CD4-positive, alpha-beta T cell (primary cell): ENCODE measurements at regions of chr10 and their contacts with region 1.

Region 1: GRCh38 chr10:124418726-124419501 is at the start of gene OAT:
- DNase-seq: peak; percentile 91 to 98 (median 96)
- ATAC-seq: peak; percentile 97
- H3K4me3 ChIP-seq: peak within 1 kb of the TSS; percentile 75
- H3K4me3 Mint-ChIP-seq: peak within 1 kb of the TSS; percentile 92
- H3K27ac ChIP-seq: peak within 1 kb of the TSS; percentile 23 to 44
- H3K27ac Mint-ChIP-seq: peak within 1 kb of the TSS; percentile 82
- H3K4me1 ChIP-seq: peaks cover 14% of the 10 kb centered on the region
- H3K4me1 Mint-ChIP-seq: peaks cover 41% of the 10 kb centered on the region
- H3K27me3 ChIP-seq: peaks cover 0 to 3% of the 10 kb centered on the region in 2 experiments
- H3K27me3 Mint-ChIP-seq: peaks cover 9% of the 10 kb centered on the region
- CTCF ChIP-seq: no peak
- total RNA-seq, gene OAT: 48.5 to 54.9 TPM

Region 2: GRCh38 chr10:123019941-123020703 is 1398.8 kb before region 1 on chr10:
- CTCF ChIA-PET with region 1: no interaction called
- POLR2A ChIA-PET with region 1: no interaction called
- intact Hi-C with region 1: loop called in 1 of 2 experiments (anchors 10 kb)
- DNase-seq: no peak
- ATAC-seq: no peak
- H3K4me3 ChIP-seq: no peak overlapping the region
- H3K4me3 Mint-ChIP-seq: no peak overlapping the region
- H3K27ac ChIP-seq: no peak overlapping the region
- H3K27ac Mint-ChIP-seq: no peak overlapping the region
- H3K4me1 ChIP-seq: no peaks in the 10 kb centered on the region
- H3K4me1 Mint-ChIP-seq: peaks cover 9% of the 10 kb centered on the region
- H3K27me3 ChIP-seq: no peaks in the 10 kb centered on the region
- H3K27me3 Mint-ChIP-seq: no peaks in the 10 kb centered on the region
- CTCF ChIP-seq: no peak

Region 3: DNA sequence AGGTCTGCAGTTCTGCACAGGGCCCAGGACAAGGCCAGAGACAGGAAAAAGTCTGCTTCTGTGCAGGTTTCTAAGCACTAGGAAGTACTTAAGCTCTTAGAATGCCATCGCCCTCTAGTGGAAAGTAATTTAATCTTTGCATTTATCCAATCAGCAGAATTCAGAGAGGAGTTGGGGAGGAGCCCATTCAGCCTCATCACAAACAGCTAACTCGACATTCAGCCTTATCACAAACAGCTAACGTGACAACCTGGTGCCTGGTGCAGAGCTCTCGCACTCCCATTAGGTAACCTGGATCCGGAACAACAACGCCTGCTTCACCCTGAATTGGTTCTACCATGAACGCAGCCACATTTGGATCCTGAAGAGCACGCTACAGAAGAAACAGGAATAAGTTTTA is 15.4 kb before region 1 on chr10:
- CTCF ChIA-PET with region 1: interaction called, 15 read pairs
- POLR2A ChIA-PET with region 1: interaction called, 7 read pairs
- intact Hi-C with region 1: no loop called
- DNase-seq: peak in 6 of 14 experiments; percentile 6 to 85 (median 54)
- ATAC-seq: peak; percentile 100
- H3K4me3 ChIP-seq: no peak overlapping the region
- H3K4me3 Mint-ChIP-seq: no peak overlapping the region
- H3K27ac ChIP-seq: peak overlapping the region in 1 of 2 donors; percentile 25
- H3K27ac Mint-ChIP-seq: peak overlapping the region; percentile 6
- H3K4me1 ChIP-seq: peaks cover 11% of the 10 kb centered on the region
- H3K4me1 Mint-ChIP-seq: peaks cover 9% of the 10 kb centered on the region
- H3K27me3 ChIP-seq: no peaks in the 10 kb centered on the region
- H3K27me3 Mint-ChIP-seq: no peaks in the 10 kb centered on the region
- CTCF ChIP-seq: peak; percentile 57

Region 4: DNA sequence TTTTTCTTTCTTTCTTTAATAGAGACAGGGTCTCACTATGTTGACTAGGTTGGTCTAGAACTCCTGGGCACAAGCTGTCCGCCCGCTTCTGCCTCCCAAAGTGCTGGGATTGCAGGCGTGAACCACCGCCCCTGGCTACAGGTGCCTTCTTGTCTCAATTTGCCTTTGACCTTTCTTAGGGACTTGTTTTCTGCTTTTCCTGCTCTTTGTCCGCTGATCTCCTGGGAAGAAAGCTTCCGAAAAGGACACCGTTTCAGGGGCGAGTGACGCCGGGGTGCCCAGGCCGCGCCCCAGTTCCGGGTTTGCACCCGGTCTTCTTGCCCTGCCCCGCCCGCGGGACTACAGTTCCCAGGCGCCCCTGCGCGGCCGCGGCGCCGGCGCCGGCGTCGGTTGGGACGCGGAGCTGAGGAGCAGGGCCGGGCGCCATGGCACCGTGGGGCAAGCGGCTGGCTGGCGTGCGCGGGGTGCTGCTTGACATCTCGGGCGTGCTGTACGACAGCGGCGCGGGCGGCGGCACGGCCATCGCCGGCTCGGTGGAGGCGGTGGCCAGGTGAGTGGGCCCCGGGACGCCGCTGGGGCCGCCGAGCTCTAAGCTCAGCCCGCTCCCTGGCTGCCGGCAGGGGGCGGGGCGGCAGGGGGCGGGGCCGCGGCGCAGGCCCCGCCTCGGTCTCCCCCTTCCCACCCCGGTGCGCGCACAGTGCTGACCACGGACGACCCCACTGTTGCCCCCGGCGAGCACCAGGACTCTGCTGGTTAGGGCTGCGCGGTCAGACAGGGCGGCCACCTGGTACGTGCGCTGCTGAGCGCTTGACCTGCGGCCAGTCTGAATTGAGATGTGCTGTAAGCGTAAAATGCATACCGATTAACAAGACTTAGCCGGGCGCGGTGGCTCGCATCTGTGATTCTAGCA is 42.8 kb after region 1 on chr10 and contains the start of gene LHPP:
- CTCF ChIA-PET with region 1: interaction called, 5 read pairs
- POLR2A ChIA-PET with region 1: interaction called, 21 read pairs
- intact Hi-C with region 1: loop called in 1 of 2 experiments (anchors 1 kb)
- DNase-seq: peak; percentile 65 to 93 (median 84)
- ATAC-seq: peak; percentile 94
- H3K4me3 ChIP-seq: peak within 1 kb of the TSS; percentile 65
- H3K4me3 Mint-ChIP-seq: peak within 1 kb of the TSS; percentile 92
- H3K27ac ChIP-seq: peak within 1 kb of the TSS; percentile 53 to 67
- H3K27ac Mint-ChIP-seq: peak within 1 kb of the TSS; percentile 83
- H3K4me1 ChIP-seq: peaks cover 36% of the 10 kb centered on the region
- H3K4me1 Mint-ChIP-seq: peaks cover 27% of the 10 kb centered on the region
- H3K27me3 ChIP-seq: peaks cover 0 to 8% of the 10 kb centered on the region in 2 experiments
- H3K27me3 Mint-ChIP-seq: peaks cover 10% of the 10 kb centered on the region
- CTCF ChIP-seq: peak; percentile 17
- total RNA-seq, gene LHPP: 15.3 to 19.6 TPM